ENCODE measurements at regions of chr3 and their contacts with region 1.

Region 1: DNA sequence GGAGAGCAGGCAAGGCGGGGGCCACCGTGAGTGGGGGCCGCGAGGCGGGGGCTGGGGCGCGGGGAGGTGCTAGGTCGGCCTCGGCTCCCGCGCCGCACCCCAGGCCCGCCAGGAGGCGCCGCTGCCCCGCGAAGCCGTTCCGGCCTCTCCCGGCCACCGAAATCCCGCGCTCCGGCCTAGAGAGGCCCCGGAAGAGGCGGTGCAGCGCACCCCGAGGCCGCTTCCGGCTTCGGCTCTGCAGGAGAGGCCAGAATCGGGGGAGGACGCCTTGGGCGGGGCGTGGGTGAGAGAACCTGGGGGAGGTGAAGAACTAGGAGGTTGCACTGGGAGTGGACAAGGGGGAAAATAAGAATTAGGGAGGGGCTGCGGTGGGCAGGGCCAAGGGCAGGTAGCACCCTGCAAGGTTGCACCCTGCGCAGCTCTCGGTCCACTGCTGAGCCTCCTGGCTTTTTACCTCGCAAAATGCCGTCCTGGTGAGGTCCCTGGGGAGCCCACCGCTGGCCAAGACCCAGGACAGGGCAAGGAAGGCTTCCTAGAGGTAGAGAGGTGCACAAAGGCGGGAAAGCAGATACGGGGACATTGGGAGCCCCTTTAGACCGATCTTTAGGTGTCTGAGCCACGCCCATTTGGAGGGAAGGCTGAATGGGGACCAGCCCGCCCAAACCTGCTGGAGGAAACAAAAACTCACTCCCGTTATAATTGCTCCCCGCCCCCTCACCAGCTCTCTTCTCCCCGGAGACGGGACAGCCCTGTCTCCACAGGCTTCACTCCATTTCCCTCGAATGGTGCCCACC is 8.4 kb upstream of the GNAI2 start:
- DNase-seq: peak; percentile 91
- ATAC-seq: peak; percentile 84
- H3K4me3 Mint-ChIP-seq: peak overlapping the region; percentile 96
- H3K27ac Mint-ChIP-seq: peak overlapping the region; percentile 94
- H3K4me1 Mint-ChIP-seq: peaks cover 23% of the 10 kb centered on the region
- H3K27me3 Mint-ChIP-seq: peaks cover 4% of the 10 kb centered on the region
- CTCF ChIP-seq: peak; percentile 97

Region 2: DNA sequence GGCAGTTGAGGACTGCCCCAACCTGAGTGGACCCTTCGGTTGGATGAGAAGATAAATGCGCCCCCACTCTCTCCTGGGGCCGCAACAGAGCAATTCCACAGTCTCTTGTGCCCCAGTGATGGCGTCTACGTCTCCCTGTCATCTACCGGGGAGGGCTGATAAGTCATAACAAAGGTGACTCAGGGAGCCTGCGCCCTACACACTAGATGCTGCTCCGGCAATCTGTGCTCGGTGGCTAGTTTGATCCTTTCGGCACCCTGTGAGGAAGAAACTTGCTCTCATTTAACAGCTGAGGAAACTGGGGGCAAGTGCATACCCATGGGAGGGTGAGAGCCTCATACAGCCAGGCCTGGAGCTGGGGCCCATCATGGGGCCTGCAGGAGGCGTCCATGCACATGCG is 86.6 kb before region 1 on chr3:
- CTCF ChIA-PET with region 1: no interaction called
- POLR2A ChIA-PET with region 1: no interaction called
- intact Hi-C with region 1: no loop called
- DNase-seq: no peak
- ATAC-seq: no peak
- H3K4me3 Mint-ChIP-seq: no peak overlapping the region
- H3K27ac Mint-ChIP-seq: no peak overlapping the region
- H3K4me1 Mint-ChIP-seq: peaks cover 10% of the 10 kb centered on the region
- H3K27me3 Mint-ChIP-seq: no peaks in the 10 kb centered on the region
- CTCF ChIP-seq: no peak

Region 3: DNA sequence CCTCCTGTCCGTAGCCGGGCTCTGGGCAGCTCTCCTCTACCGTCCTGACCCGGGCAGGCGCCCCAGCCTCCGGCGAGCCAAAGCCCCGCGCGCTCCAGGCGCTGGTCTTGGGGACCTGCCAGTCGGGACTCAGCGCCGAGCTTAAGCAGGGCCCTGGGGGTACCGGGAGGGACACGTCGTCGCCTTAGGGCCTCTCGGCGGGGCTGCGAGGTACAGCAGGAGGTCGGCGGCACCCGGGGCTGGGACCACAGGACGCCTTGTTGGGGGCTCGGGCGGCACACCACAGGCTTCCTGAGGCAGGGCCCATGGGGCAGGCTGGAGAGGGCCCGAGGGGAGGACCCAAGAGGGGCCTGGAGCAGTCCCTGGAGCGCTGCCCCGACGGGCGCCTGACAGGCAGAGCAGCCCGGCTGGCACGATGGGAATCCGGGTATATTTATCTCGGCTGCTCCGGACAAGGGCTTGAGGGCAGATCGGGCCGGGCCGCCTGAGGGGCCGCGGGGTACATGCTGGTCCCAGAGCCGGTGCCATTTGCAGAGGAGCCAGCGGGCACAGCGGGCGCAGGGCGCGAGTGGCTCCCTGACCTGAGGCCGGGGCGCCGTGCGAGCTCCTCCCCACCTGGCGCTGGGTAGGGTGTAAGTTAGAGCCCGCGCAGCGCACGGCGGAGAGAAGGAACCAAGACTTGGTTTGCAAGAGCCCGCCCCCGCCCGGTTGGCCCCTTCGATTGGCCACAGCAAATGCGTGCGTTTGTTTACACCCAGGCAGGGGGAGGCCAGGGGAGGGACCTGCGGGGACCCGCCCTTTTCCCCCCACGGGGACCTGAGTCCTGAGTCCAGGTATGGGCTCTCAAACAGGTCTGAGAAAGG is 21.9 kb before region 1 on chr3:
- CTCF ChIA-PET with region 1: interaction called, 26 read pairs
- POLR2A ChIA-PET with region 1: interaction called, 6 read pairs
- intact Hi-C with region 1: no loop called
- DNase-seq: peak; percentile 61
- ATAC-seq: peak; percentile 60
- H3K4me3 Mint-ChIP-seq: no peak overlapping the region
- H3K27ac Mint-ChIP-seq: no peak overlapping the region
- H3K4me1 Mint-ChIP-seq: no peaks in the 10 kb centered on the region
- H3K27me3 Mint-ChIP-seq: peaks cover 48% of the 10 kb centered on the region
- CTCF ChIP-seq: no peak

Region 4: GRCh38 chr3:50245831-50246516 is 18.4 kb after region 1 on chr3:
- CTCF ChIA-PET with region 1: interaction called, 239 read pairs
- POLR2A ChIA-PET with region 1: interaction called, 11 read pairs
- intact Hi-C with region 1: loop called (anchors 2 kb)
- DNase-seq: peak; percentile 99
- ATAC-seq: peak; percentile 73
- H3K4me3 Mint-ChIP-seq: peak overlapping the region; percentile 70
- H3K27ac Mint-ChIP-seq: peak overlapping the region; percentile 95
- H3K4me1 Mint-ChIP-seq: peaks cover 74% of the 10 kb centered on the region
- H3K27me3 Mint-ChIP-seq: no peaks in the 10 kb centered on the region
- CTCF ChIP-seq: peak; percentile 98

Region 5: GRCh38 chr3:50260027-50260941 is 32.7 kb after region 1 on chr3:
- CTCF ChIA-PET with region 1: interaction called, 97 read pairs
- POLR2A ChIA-PET with region 1: interaction called, 9 read pairs
- intact Hi-C with region 1: no loop called
- DNase-seq: peak; percentile 91
- ATAC-seq: peak; percentile 90
- H3K4me3 Mint-ChIP-seq: peak overlapping the region; percentile 61
- H3K27ac Mint-ChIP-seq: peak overlapping the region; percentile 78
- H3K4me1 Mint-ChIP-seq: peaks cover 4% of the 10 kb centered on the region
- H3K27me3 Mint-ChIP-seq: no peaks in the 10 kb centered on the region
- CTCF ChIP-seq: peak; percentile 99

Region 6: GRCh38 chr3:50267280-50267913 is 39.8 kb after region 1 on chr3:
- CTCF ChIA-PET with region 1: interaction called, 97 read pairs
- POLR2A ChIA-PET with region 1: interaction called, 9 read pairs
- intact Hi-C with region 1: loop called (anchors 2 kb)
- DNase-seq: no peak
- ATAC-seq: no peak
- H3K4me3 Mint-ChIP-seq: no peak overlapping the region
- H3K27ac Mint-ChIP-seq: no peak overlapping the region
- H3K4me1 Mint-ChIP-seq: peaks cover 3% of the 10 kb centered on the region
- H3K27me3 Mint-ChIP-seq: peaks cover 15% of the 10 kb centered on the region
- CTCF ChIP-seq: no peak

Region 7: GRCh38 chr3:50272911-50273693 is 45.5 kb after region 1 on chr3:
- CTCF ChIA-PET with region 1: interaction called, 26 read pairs
- POLR2A ChIA-PET with region 1: interaction called, 4 read pairs
- intact Hi-C with region 1: loop called (anchors 2 kb)
- DNase-seq: peak; percentile 94
- ATAC-seq: peak; percentile 88
- H3K4me3 Mint-ChIP-seq: peak overlapping the region; percentile 74
- H3K27ac Mint-ChIP-seq: peak overlapping the region; percentile 26
- H3K4me1 Mint-ChIP-seq: peaks cover 33% of the 10 kb centered on the region
- H3K27me3 Mint-ChIP-seq: peaks cover 39% of the 10 kb centered on the region
- CTCF ChIP-seq: peak; percentile 96